Activated CD8-positive, alpha-beta T cell treated with anti-CD3 and anti-CD28 coated beads, Interleukin-2, amount 10 ng/mL, durations not matched to agents 7 days and 5 days (primary cell): ENCODE measurements at regions of chr6 and their contacts with region 1.

Region 1: DNA sequence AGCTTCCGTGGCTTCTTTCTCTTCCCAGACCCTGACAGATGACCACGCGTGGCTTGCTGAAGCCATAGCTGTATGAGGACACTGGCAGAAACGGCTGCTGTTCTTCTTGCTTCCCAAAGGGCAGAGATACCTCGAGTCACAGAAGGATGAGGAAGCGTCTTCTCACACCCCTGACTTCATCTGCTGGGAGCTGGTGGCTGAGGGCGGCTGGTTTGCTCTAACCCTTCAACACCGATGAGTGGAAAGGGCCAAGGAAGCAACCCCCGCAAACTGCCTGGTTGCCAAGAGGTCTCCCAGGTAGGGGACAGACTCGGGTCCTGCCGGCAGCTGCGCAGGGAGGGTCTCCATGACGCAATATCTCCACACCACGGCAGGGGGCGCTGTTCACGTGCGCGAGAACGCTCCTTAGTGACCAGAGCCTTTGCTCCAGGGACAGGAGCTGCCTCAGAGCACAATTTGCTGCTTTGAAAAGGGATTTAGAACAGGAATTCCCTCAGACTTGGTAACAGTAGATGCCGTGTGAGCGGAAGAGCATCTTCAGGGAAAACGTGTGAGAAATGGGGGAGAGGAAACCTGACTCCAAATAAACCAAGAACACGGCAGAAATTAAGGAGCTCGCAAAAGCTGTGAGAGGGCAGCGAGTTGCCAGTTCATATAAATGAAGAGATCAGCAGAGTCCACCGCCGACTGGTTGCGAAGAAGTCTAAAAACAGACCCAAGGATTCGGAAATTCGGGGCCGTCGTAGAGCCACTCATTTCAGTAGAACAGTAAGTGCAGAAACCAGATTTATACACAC is 80.2 kb downstream of the ERMARD start:
- DNase-seq: peak; percentile 77
- ATAC-seq: peak; percentile 82
- H3K4me3 Mint-ChIP-seq: no peak overlapping the region
- H3K27ac Mint-ChIP-seq: no peak overlapping the region
- H3K4me1 Mint-ChIP-seq: peaks cover 4% of the 10 kb centered on the region
- H3K27me3 Mint-ChIP-seq: peaks cover 51% of the 10 kb centered on the region

Region 2: DNA sequence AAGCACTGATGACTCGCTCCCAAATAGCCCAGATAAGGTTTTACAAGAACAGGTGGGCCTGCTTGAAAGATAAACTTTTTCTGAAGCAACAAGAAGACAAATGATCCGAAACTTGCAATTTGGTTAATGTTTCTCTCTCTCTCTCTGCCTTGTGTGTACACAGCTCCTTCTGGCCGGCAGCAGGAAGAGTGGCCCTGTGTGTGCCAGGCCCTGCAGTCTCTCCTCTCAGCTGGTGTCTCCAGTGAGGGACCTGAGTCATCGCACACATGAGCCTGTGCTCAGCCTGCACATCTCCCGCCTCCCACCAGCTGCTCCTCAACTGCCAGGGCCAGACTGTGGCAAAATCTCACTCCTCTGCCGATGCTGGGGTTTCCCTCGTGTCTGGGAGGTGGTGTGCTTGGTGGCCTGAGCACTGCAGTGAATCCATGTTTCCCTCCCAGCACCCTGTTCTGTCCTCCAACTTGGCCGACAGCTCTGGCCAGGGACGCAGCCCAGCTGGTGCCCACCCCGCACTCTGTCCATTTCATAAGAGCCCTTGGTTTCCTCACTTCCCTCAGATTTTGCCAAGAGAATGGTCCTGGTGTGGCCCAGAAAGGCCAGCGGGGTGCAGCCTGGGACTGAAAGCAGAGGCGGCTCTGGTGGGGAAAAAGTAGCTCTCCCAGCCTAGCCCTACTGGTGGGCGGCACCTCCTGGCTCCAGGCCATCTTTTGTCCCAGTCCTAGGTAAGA is 30.8 kb before region 1 on chr6:
- CTCF ChIA-PET with region 1: interaction called, 37 read pairs
- POLR2A ChIA-PET with region 1: no interaction called
- DNase-seq: no peak
- ATAC-seq: no peak
- H3K4me3 Mint-ChIP-seq: no peak overlapping the region
- H3K27ac Mint-ChIP-seq: no peak overlapping the region
- H3K4me1 Mint-ChIP-seq: peaks cover 31% of the 10 kb centered on the region
- H3K27me3 Mint-ChIP-seq: peaks cover 66% of the 10 kb centered on the region

Region 3: DNA sequence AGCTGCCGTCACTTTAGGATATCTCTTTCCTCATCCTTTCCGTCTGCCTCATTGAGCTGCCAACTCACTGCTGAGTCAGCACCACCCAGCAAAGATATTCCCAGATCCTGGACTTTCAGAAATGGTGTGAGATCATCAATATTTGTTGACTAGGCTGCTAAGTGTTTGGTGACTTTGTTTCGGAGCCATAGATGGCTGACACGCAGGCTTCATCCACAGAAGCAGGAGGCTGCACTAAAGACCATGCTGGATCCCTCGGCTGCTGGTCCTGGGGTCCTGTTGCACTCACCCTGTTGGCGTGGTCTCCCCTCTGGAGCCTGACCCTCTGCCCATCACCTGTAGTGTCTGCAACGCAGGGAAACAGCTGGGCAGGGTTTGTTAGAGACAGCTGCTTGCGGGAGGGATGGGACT is 16.3 kb after region 1 on chr6:
- CTCF ChIA-PET with region 1: interaction called, 16 read pairs
- POLR2A ChIA-PET with region 1: no interaction called
- DNase-seq: no peak
- ATAC-seq: no peak
- H3K4me3 Mint-ChIP-seq: no peak overlapping the region
- H3K27ac Mint-ChIP-seq: no peak overlapping the region
- H3K4me1 Mint-ChIP-seq: no peaks in the 10 kb centered on the region
- H3K27me3 Mint-ChIP-seq: peaks cover 8% of the 10 kb centered on the region

Region 4: DNA sequence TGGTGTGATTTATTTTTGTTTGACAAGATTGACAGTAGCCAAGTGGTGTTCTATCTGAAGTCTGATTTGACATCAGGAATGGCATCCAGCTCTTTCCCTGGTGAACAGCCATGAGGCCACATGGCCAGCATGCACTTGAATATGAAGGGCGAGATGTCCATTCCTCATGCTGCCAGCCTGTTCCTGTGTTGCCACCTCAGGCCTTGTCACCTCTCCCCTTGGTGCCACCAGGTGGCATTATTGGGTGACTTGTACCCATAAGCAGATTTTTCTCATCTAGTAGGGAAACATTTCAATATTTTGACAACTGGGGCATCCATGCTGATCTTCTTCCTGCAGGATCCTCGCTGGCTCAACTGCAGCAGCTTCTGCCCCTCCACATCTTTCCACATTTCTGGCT is 118.9 kb after region 1 on chr6:
- CTCF ChIA-PET with region 1: interaction called, 15 read pairs
- POLR2A ChIA-PET with region 1: no interaction called
- DNase-seq: peak; percentile 56
- ATAC-seq: peak; percentile 69
- H3K4me3 Mint-ChIP-seq: no peak overlapping the region
- H3K27ac Mint-ChIP-seq: no peak overlapping the region
- H3K4me1 Mint-ChIP-seq: peaks cover 14% of the 10 kb centered on the region
- H3K27me3 Mint-ChIP-seq: peaks cover 15% of the 10 kb centered on the region

Region 5: DNA sequence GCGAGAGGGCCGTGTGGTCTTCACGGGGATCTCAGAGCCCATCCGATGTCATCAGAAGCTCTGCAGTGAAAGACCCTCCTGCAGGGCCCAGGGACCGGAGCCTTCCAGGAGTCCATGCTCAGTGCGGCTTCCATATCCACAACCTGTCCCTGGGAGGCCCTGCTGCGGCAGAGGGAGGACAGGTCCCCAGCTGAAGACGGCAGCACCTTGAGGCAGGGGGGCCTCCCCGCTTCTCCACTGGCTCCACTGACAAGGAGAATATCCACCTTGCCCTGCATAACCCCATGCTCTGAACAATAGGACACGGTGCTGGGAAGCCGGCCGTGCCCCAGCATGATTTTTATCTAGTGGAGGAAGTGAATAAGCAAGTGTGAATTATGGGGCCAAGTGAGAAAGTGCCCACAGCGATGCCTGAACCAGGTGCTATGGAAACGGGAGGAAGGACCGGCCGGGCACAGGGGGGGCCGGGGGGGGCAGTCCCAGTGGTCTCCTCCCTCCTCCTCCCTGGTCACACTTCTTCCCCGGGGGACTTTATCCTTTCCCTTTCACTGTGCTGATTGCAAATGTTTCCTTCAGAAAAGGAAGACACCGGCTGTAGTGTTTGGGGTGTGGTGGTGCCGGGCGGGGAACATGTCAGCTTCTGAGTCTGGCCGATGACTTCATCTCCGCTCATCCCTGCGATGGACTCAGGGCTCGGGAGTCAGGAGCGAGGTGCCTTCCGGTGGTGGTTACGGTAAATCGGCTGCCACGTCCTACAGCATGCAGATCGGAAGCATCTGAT is 144.8 kb after region 1 on chr6:
- CTCF ChIA-PET with region 1: no interaction called
- POLR2A ChIA-PET with region 1: no interaction called
- DNase-seq: no peak
- ATAC-seq: no peak
- H3K4me3 Mint-ChIP-seq: no peak overlapping the region
- H3K27ac Mint-ChIP-seq: no peak overlapping the region
- H3K4me1 Mint-ChIP-seq: no peaks in the 10 kb centered on the region
- H3K27me3 Mint-ChIP-seq: peaks cover 1% of the 10 kb centered on the region

Region 6: DNA sequence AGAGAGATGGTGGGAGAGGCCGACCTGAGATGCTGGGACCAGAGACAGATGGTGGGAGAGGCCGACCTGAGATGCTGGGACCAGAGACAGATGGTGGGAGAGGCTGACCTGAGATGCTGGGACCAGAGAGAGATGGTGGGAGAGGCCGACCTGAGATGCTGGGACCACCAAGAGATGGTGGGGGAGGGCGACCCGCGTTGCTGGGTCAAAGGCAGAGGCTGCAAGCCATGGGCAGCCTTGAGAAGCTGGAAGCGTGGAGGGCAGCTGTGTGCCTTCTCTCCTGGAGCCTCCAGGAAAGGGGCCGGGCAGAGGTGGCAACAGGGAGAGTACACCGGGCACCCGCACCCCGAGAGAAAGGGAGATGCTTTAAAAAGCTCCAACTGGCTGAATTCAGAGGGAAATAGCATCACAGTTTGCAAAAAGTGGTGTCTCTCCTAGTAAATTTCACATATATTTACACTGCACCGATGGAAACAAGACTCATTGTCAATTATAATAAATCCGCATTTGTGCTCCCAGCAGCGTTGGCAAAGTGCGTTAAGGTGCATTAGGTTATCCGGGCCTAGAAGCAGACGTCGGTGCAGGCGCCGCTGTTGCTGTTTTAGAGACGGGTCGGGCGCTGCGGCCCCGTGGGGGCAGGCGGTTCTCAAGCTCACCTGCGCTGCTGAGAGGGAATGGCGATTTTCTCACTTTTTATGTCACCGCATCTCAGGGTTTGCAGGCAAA is 326.8 kb after region 1 on chr6:
- CTCF ChIA-PET with region 1: no interaction called
- POLR2A ChIA-PET with region 1: no interaction called
- DNase-seq: no peak
- ATAC-seq: no peak
- H3K4me3 Mint-ChIP-seq: no peak overlapping the region
- H3K27ac Mint-ChIP-seq: no peak overlapping the region
- H3K4me1 Mint-ChIP-seq: peaks cover 12% of the 10 kb centered on the region
- H3K27me3 Mint-ChIP-seq: no peaks in the 10 kb centered on the region

Region 7: GRCh38 chr6:170522565-170523183 is 691.0 kb after region 1 on chr6:
- CTCF ChIA-PET with region 1: interaction called, 32 read pairs
- POLR2A ChIA-PET with region 1: no interaction called
- DNase-seq: peak; percentile 28
- ATAC-seq: no peak
- H3K4me3 Mint-ChIP-seq: no peak overlapping the region
- H3K27ac Mint-ChIP-seq: no peak overlapping the region
- H3K4me1 Mint-ChIP-seq: peaks cover 14% of the 10 kb centered on the region
- H3K27me3 Mint-ChIP-seq: peaks cover 63% of the 10 kb centered on the region